Astrocyte of the cerebellum (primary cell): ENCODE measurements at regions of chr21 and their contacts with region 1.

Region 1: GRCh38 chr21:42009831-42010523 is at the start of gene ZBTB21:
- DNase-seq: peak; percentile 95
- H3K4me3 ChIP-seq: peak within 1 kb of the TSS; percentile 75
- CTCF ChIP-seq: no peak

Region 2: DNA sequence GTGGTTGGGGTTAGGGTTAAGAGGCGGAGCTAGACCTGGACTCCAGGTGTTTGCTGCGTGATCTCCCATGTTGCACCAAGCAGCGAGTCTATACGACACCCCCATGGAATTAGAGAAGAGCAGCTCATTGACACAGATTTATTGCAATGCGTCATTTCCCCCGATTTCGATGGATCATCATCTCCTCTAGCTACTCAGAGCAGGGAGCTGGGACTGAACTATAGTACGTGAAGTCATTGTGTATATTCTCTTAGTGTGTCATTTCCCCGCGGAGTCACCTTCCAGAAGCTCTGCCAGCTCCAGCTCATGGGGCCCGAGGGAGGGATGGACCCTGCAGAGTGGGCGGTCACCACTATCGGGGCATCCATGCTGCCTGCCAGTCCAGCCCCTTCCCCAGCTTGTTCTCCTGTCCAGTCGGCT is 48.7 kb before region 1 on chr21:
- in situ Hi-C with region 1: loop called (anchors 5 kb)
- DNase-seq: no peak
- H3K4me3 ChIP-seq: no peak overlapping the region
- CTCF ChIP-seq: no peak